Endothelial cell of umbilical vein (primary cell): ENCODE measurements at regions of chr2 and their contacts with region 1.

Region 1: DNA sequence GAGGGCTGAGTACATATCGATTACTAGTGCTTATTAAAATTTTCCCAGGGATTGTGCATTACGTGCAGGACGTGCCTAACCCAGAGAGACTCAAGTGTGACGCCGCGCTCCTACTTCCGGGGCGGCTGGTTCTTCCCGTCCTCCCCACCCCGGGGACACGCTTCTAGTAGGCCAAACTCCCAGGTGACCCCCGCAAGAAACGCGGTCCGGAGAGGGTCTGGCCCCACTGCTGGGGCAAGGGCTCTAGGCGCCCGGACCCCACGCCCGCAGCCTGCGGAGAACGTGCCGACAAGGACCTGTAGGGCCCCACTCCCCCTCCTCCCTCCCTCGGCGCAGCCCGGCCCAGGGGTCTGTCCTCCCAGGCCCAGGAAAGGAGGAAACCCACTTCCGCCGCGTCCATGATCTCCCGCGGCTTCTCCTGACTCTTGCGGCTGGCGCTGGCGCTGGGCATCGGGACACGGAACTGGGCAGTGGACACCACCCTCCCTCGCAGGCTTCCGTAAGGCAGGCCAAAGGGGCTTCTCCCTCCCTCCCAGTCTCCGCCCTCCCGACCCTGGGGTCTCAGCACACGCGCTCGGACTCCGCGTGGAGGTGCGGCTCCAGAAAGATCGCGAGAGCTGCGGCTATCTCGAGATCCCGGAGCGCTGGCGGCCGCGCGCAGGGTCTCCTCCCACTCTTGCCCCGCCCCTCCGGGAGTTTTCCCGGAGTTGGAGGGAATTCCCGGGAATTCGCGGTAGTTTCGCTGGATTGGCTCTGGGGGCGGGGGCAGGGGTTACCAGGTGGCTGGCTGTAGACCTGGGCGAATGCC is at the start of gene DARS1:
- DNase-seq: peak; percentile 92
- H3K4me3 ChIP-seq: peak within 1 kb of the TSS; percentile 93 to 96 (median 94)
- H3K27ac ChIP-seq: peak within 1 kb of the TSS; percentile 81
- H3K4me1 ChIP-seq: peaks cover 13% of the 10 kb centered on the region
- H3K27me3 ChIP-seq: no peaks in the 10 kb centered on the region
- CTCF ChIP-seq: no peak
- POLR2A ChIP-seq: peak; percentile 54
- total RNA-seq, gene DARS1: 41.5 and 48.8 TPM in 2 replicates

Region 2: GRCh38 chr2:135590619-135591260 is 394.5 kb before region 1 on chr2:
- CTCF ChIA-PET with region 1: no interaction called
- POLR2A ChIA-PET with region 1: no interaction called
- dilution Hi-C with region 1: no loop called
- intact Hi-C with region 1: no loop called
- DNase-seq: no peak
- H3K4me3 ChIP-seq: no peak overlapping the region
- H3K27ac ChIP-seq: no peak overlapping the region
- H3K4me1 ChIP-seq: no peaks in the 10 kb centered on the region
- H3K27me3 ChIP-seq: no peaks in the 10 kb centered on the region
- CTCF ChIP-seq: no peak
- POLR2A ChIP-seq: no peak

Region 3: DNA sequence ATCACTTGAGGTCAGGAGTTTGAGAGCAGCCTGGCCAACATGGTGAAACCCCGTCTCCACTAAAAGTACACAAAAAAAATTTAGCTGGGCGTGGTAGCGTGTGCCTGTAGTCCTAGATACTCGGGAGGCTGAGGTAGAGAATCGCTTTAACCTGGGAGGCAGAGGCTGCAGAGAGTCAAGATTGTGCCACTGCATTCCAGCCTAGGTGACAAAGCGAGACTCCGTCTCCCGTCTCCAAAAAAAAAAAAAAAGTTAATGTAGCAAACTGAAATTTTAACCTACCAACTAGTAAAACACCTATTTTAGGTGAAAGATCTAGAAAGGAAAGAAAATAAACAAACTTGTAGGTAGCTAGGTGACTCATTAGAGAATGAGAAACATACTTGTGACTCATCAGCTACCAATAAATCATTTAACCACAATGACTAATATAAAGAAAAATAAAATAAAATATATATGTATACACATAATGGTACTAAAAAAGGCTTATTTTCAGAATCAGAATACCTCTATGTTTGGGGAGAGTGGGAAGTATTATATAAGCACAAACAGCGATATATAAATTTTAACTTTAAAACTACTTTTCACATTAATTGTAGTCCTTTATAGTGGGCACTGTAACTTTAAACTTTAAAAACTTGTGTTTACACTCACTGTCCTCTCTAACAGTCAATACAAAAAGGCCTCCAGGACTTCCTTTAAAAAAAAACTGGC is 36.4 kb before region 1 on chr2:
- CTCF ChIA-PET with region 1: no interaction called
- POLR2A ChIA-PET with region 1: no interaction called
- dilution Hi-C with region 1: no loop called
- intact Hi-C with region 1: loop called (anchors 1 kb)
- DNase-seq: peak; percentile 69
- H3K4me3 ChIP-seq: no peak overlapping the region
- H3K27ac ChIP-seq: peak overlapping the region; percentile 70
- H3K4me1 ChIP-seq: peaks cover 20% of the 10 kb centered on the region
- H3K27me3 ChIP-seq: no peaks in the 10 kb centered on the region
- CTCF ChIP-seq: no peak
- POLR2A ChIP-seq: no peak

Region 4: GRCh38 chr2:136000502-136000901 is 15.3 kb after region 1 on chr2:
- CTCF ChIA-PET with region 1: interaction called, 3 read pairs
- POLR2A ChIA-PET with region 1: no interaction called
- dilution Hi-C with region 1: no loop called
- intact Hi-C with region 1: loop called (anchors 2 kb)
- DNase-seq: peak; percentile 23
- H3K4me3 ChIP-seq: no peak overlapping the region
- H3K27ac ChIP-seq: no peak overlapping the region
- H3K4me1 ChIP-seq: peaks cover 6% of the 10 kb centered on the region
- H3K27me3 ChIP-seq: peaks cover 0 to 2% of the 10 kb centered on the region in 2 experiments
- CTCF ChIP-seq: no peak
- POLR2A ChIP-seq: no peak

Region 5: DNA sequence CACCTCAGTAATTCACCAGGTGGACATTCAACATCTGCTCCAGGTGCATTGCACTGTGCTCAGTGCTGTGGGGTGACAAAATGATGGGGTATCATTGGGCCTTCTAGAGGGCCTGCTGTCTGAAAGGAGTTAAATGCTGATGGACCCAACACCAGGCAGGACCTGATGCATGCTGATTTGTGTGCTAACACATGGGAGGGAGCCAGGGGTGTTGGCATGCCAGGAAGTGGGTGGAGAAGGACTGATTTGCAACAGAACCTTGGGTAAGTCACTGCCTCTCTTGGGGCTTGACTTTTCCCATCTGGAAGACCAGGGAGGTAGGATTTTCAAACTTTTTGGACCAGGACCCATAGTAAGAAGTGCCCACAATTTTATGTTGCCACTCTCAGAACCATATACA is 190.6 kb after region 1 on chr2:
- CTCF ChIA-PET with region 1: no interaction called
- POLR2A ChIA-PET with region 1: no interaction called
- dilution Hi-C with region 1: no loop called
- intact Hi-C with region 1: no loop called
- DNase-seq: no peak
- H3K4me3 ChIP-seq: no peak overlapping the region
- H3K27ac ChIP-seq: no peak overlapping the region
- H3K4me1 ChIP-seq: no peaks in the 10 kb centered on the region
- H3K27me3 ChIP-seq: no peaks in the 10 kb centered on the region
- CTCF ChIP-seq: no peak
- POLR2A ChIP-seq: no peak

Region 6: GRCh38 chr2:136246086-136246669 is 261.0 kb after region 1 on chr2:
- CTCF ChIA-PET with region 1: no interaction called
- POLR2A ChIA-PET with region 1: no interaction called
- dilution Hi-C with region 1: no loop called
- intact Hi-C with region 1: loop called (anchors 1 kb)
- DNase-seq: peak; percentile 29
- H3K4me3 ChIP-seq: no peak overlapping the region
- H3K27ac ChIP-seq: no peak overlapping the region
- H3K4me1 ChIP-seq: peaks cover 24% of the 10 kb centered on the region
- H3K27me3 ChIP-seq: peaks cover under 1 to 4% of the 10 kb centered on the region in 2 experiments
- CTCF ChIP-seq: no peak
- POLR2A ChIP-seq: no peak